B cell (primary cell): ENCODE measurements at regions of chr1 and their contacts with region 1.

Region 1: GRCh38 chr1:110879758-110880606 is 7.0 kb downstream of the CD53 start:
- DNase-seq: peak; percentile 64
- ATAC-seq: peak; percentile 73
- H3K4me3 ChIP-seq: peak overlapping the region in 4 of 5 experiments; percentile 5 to 50 (median 16)
- H3K4me3 Mint-ChIP-seq: peak overlapping the region; percentile 78
- H3K27ac ChIP-seq: peak overlapping the region; percentile 64 to 96
- H3K27ac Mint-ChIP-seq: peak overlapping the region; percentile 93
- H3K4me1 ChIP-seq: peaks cover 57 to 92% of the 10 kb centered on the region in 2 donors
- H3K4me1 Mint-ChIP-seq: peaks cover 87% of the 10 kb centered on the region
- H3K27me3 ChIP-seq: no peaks in the 10 kb centered on the region
- H3K27me3 Mint-ChIP-seq: no peaks in the 10 kb centered on the region
- CTCF ChIP-seq: no peak

Region 2: DNA sequence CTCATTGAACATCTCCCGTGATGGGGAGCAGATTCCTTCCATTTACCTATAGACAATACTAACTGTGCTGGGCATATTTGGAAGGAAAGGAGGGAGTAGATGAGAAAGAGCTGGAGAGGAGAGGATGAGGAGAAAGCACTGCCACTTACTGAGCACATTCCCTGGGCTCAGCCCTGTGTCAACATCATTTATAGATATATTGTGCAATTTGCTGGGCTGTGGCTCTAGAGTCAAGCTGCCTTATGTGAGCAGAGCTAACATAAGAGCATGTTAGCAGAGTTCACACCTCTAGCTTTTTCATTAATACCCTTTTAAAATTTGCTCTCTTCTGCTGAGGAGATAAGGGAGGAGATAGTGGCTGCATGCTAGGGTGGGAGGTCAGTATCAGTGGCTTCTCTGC is 29.3 kb before region 1 on chr1:
- CTCF ChIA-PET with region 1: no interaction called
- POLR2A ChIA-PET with region 1: interaction called, 10 read pairs
- intact Hi-C with region 1: no loop called
- DNase-seq: no peak
- ATAC-seq: no peak
- H3K4me3 ChIP-seq: no peak overlapping the region
- H3K4me3 Mint-ChIP-seq: no peak overlapping the region
- H3K27ac ChIP-seq: no peak overlapping the region
- H3K27ac Mint-ChIP-seq: no peak overlapping the region
- H3K4me1 ChIP-seq: peaks cover 0 to 7% of the 10 kb centered on the region in 2 donors
- H3K4me1 Mint-ChIP-seq: peaks cover 13% of the 10 kb centered on the region
- H3K27me3 ChIP-seq: no peaks in the 10 kb centered on the region
- H3K27me3 Mint-ChIP-seq: peaks cover 3% of the 10 kb centered on the region
- CTCF ChIP-seq: no peak

Region 3: DNA sequence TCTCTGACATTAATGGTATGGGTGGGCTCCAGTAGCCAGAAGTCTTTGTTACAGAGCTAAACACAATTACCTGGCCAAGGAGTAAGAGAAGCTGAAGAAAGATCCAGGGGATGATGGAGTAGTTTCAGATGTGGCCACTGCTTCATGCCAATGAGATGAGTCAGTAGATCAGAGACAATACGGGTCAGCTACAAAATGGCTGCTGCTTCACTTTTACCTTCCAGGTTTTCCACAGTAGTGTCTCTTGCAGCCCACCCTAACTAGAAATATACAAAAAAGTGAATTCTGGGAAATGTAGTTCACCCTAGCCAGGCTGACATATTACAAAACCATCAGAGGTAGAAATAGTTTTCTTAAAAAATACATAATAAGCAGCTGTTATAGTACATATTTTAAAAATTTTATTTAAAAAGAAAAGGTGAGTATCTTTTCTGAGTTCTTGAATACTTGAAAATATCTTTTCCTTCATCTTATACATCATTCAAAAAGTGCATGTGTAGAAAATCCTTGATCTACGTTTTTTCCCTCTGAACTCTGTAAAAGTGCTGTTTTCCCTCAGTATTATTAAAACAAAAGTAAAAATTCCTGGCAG is 47.6 kb after region 1 on chr1:
- CTCF ChIA-PET with region 1: no interaction called
- POLR2A ChIA-PET with region 1: no interaction called
- intact Hi-C with region 1: no loop called
- DNase-seq: no peak
- ATAC-seq: no peak
- H3K4me3 ChIP-seq: no peak overlapping the region
- H3K4me3 Mint-ChIP-seq: no peak overlapping the region
- H3K27ac ChIP-seq: no peak overlapping the region
- H3K27ac Mint-ChIP-seq: no peak overlapping the region
- H3K4me1 ChIP-seq: peaks cover 0 to 5% of the 10 kb centered on the region in 2 donors
- H3K4me1 Mint-ChIP-seq: peaks cover 6% of the 10 kb centered on the region
- H3K27me3 ChIP-seq: peaks cover 0 to 6% (median 0%) of the 10 kb centered on the region in 4 experiments
- H3K27me3 Mint-ChIP-seq: no peaks in the 10 kb centered on the region
- CTCF ChIP-seq: no peak